Heart left ventricle (tissue), 16 donors: ENCODE measurements at regions of chr5 and their contacts with region 1.

Region 1: GRCh38 chr5:69334793-69335268 is 2.2 kb upstream of the CCDC125 start:
- DNase-seq: peak; percentile 84 to 92 (median 89)
- ATAC-seq: peak; percentile 87 to 92 (median 88)
- H3K4me3 ChIP-seq: peak overlapping the region in 8 of 12 donors; percentile 5 to 26 (median 21)
- H3K27ac ChIP-seq: peak overlapping the region in 7 of 12 donors; percentile 30 to 60 (median 43)
- H3K4me1 ChIP-seq: peaks cover 0 to 25% (median 11%) of the 10 kb centered on the region in 12 donors
- H3K27me3 ChIP-seq: no peaks in the 10 kb centered on the region
- CTCF ChIP-seq: peak; percentile 63 to 90 (median 76)
- POLR2A ChIP-seq: no peak

Region 2: GRCh38 chr5:69093771-69094482 is 240.9 kb before region 1 on chr5 and contains the start of gene SLC30A5:
- intact Hi-C with region 1: loop called in 6 of 10 experiments (anchors 5 to 10 kb)
- DNase-seq: peak; percentile 99 to 100 (median 99)
- ATAC-seq: peak; percentile 99 to 100 (median 100)
- H3K4me3 ChIP-seq: peak within 1 kb of the TSS; percentile 73 to 98 (median 90)
- H3K27ac ChIP-seq: peak within 1 kb of the TSS; percentile 86 to 99 (median 96)
- H3K4me1 ChIP-seq: peaks cover 0 to 29% (median 15%) of the 10 kb centered on the region in 12 donors
- H3K27me3 ChIP-seq: no peaks in the 10 kb centered on the region
- CTCF ChIP-seq: peak; percentile 85 to 98 (median 92)
- POLR2A ChIP-seq: peak; percentile 58 to 94
- total RNA-seq, gene SLC30A5: 26.9 to 44.3 (median 30.0) TPM

Region 3: GRCh38 chr5:69166686-69167492 is 167.9 kb before region 1 on chr5 and contains the start of gene CCNB1:
- intact Hi-C with region 1: loop called in 2 of 10 experiments (anchors 5 to 10 kb)
- DNase-seq: peak; percentile 97 to 99 (median 98)
- ATAC-seq: peak; percentile 100
- H3K4me3 ChIP-seq: peak within 1 kb of the TSS; percentile 58 to 87 (median 72)
- H3K27ac ChIP-seq: peak within 1 kb of the TSS in 8 of 12 donors; percentile 3 to 71 (median 48)
- H3K4me1 ChIP-seq: peaks cover 0 to 19% (median 11%) of the 10 kb centered on the region in 12 donors
- H3K27me3 ChIP-seq: no peaks in the 10 kb centered on the region
- CTCF ChIP-seq: peak in 3 of 12 donors; percentile 7 to 12 (median 8)
- POLR2A ChIP-seq: no peak
- total RNA-seq, gene CCNB1: 1.3 to 22.9 (median 3.8) TPM

Region 4: GRCh38 chr5:69217548-69218526 is 117.0 kb before region 1 on chr5:
- intact Hi-C with region 1: loop called in 1 of 10 experiments (anchors 5 kb)
- DNase-seq: peak; percentile 98 to 99 (median 98)
- ATAC-seq: peak; percentile 98 to 99 (median 98)
- H3K4me3 ChIP-seq: peak overlapping the region; percentile 58 to 100 (median 94)
- H3K27ac ChIP-seq: peak overlapping the region; percentile 93 to 99 (median 98)
- H3K4me1 ChIP-seq: peaks cover 0 to 32% (median 12%) of the 10 kb centered on the region in 12 donors
- H3K27me3 ChIP-seq: no peaks in the 10 kb centered on the region
- CTCF ChIP-seq: peak in 10 of 12 donors; percentile 8 to 47 (median 32)
- POLR2A ChIP-seq: peak; percentile 88

Region 5: DNA sequence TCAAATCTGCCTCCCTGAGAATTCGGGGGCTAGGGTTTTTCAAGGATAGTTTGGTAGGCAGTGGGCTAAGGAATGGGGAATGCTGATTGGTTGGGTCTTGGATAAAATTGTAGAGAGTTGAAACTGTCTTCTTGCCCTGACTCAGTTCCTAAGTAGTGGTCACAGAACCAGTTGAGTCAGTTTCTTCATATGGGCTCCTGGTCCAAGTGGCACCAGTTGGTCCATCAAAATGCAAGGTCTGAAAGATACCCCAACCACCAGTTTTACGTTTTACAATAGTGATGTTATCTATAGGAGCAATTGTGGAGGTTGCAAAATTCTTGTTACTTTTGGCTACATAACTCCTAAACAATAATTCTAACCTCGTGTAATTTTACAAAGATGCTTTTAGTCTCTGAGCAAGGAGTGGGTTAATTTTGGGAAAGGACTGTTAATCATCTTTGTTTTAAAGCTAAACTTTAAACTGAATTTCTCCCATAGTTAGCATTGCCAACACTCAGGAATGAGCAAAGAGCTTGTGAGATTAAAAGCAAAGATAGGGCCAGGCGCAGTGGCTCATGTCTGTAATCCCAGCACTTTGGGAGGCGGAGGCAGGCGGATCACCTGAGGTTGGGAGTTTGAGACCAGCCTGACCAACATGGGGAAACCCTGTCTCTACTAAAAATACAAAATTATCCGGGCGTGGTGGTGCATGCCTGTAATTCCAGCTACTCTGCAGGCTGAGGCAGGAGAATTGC is 92.4 kb before region 1 on chr5:
- intact Hi-C with region 1: loop called in 2 of 10 experiments (anchors 5 to 10 kb)
- DNase-seq: no peak
- ATAC-seq: no peak
- H3K4me3 ChIP-seq: no peak overlapping the region
- H3K27ac ChIP-seq: no peak overlapping the region
- H3K4me1 ChIP-seq: peaks cover 0 to 12% (median 1%) of the 10 kb centered on the region in 12 donors
- H3K27me3 ChIP-seq: no peaks in the 10 kb centered on the region
- CTCF ChIP-seq: no peak
- POLR2A ChIP-seq: no peak